ENCODE measurements at regions of chr10 and their contacts with region 1.

Region 1: GRCh38 chr10:102394079-102394800 is 1.3 kb upstream of the NFKB2 start:
- DNase-seq: peak; percentile 98
- H3K4me3 ChIP-seq: peak overlapping the region; percentile 61 to 76 (median 68)
- H3K27ac ChIP-seq: peak overlapping the region; percentile 97 to 99 (median 98)
- H3K4me1 ChIP-seq: peaks cover 0 to 47% (median 45%) of the 10 kb centered on the region in 4 donors
- H3K27me3 ChIP-seq: no peaks in the 10 kb centered on the region
- CTCF ChIP-seq: peak; percentile 18 to 99 (median 70)
- EP300 ChIP-seq: peak in 2 of 4 donors; percentile 78 to 92
- POLR2A ChIP-seq: peak; percentile 51 to 55

Region 2: DNA sequence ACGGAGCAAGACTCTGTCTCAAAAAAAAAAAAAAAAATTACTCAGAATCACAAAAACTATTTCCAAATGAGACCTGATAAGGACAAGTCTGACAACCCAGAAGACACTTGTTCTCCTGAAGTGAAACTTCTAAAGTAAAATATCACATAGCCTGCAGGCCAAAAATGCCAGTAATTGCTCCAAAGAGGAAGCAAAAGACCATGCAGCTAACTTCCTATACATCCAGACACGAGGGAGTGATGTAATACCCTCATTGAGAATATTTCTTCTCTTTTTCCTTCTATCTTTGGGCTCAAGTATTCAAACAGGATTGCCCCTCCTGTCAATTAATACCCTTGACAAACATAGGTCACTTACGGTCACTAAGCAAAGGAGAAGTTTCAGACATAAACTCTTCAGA is 369.4 kb before region 1 on chr10:
- intact Hi-C with region 1: no loop called
- DNase-seq: no peak
- H3K4me3 ChIP-seq: no peak overlapping the region
- H3K27ac ChIP-seq: no peak overlapping the region
- H3K4me1 ChIP-seq: no peaks in the 10 kb centered on the region
- H3K27me3 ChIP-seq: no peaks in the 10 kb centered on the region
- CTCF ChIP-seq: no peak
- EP300 ChIP-seq: no peak
- POLR2A ChIP-seq: no peak

Region 3: GRCh38 chr10:102407437-102408130 is 13.3 kb after region 1 on chr10:
- intact Hi-C with region 1: loop called (anchors 1 kb)
- DNase-seq: peak; percentile 92
- H3K4me3 ChIP-seq: peak overlapping the region; percentile 70 to 80 (median 78)
- H3K27ac ChIP-seq: peak overlapping the region; percentile 84 to 99 (median 98)
- H3K4me1 ChIP-seq: peaks cover 0 to 67% (median 64%) of the 10 kb centered on the region in 4 donors
- H3K27me3 ChIP-seq: peaks cover 0 to 22% (median 10%) of the 10 kb centered on the region in 3 donors
- CTCF ChIP-seq: no peak
- EP300 ChIP-seq: peak; percentile 100
- POLR2A ChIP-seq: no peak

Region 4: DNA sequence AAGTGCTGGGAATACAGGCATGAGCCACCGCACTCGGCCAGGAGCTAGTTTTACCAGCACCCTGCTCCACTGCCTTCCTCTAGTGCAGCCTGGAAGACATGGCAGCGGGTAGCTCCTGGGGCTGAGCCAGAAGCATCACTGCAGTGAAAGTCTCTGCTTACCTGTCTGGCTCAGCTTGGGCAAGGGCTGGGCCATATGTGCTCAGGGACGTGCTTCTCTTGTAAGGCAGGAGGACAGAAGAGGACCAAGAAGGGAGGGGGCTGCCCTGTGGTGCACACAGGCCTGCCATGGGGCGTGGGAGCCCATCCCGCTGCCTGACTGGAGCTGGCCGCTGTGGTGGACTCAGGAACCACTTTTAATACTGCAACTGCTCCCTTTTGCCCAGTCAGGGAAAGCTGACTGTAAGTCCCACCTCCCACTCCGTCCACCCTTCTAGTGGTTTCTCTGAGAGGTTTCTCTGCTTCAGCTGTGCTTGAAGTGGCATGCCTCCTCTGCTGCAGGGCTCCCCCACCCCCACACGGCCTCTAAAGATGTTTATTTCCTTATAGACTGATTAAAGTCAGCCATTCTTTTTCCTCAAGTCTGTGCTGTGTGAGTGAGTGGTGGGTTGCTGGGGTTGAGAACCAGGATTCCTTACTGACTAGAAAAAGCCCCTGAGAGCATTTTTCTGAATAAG is 82.4 kb after region 1 on chr10:
- intact Hi-C with region 1: loop called (anchors 1 kb)
- DNase-seq: no peak
- H3K4me3 ChIP-seq: no peak overlapping the region
- H3K27ac ChIP-seq: peak overlapping the region in 3 of 4 donors; percentile 20 to 26 (median 20)
- H3K4me1 ChIP-seq: no peaks in the 10 kb centered on the region
- H3K27me3 ChIP-seq: no peaks in the 10 kb centered on the region
- CTCF ChIP-seq: no peak
- EP300 ChIP-seq: no peak
- POLR2A ChIP-seq: no peak

Region 5: GRCh38 chr10:102583435-102584417 is 189.5 kb after region 1 on chr10:
- intact Hi-C with region 1: loop called (anchors 5 kb)
- DNase-seq: peak; percentile 94
- H3K4me3 ChIP-seq: no peak overlapping the region
- H3K27ac ChIP-seq: peak overlapping the region in 1 of 4 donors; percentile 41
- H3K4me1 ChIP-seq: peaks cover 0 to 26% (median 15%) of the 10 kb centered on the region in 4 donors
- H3K27me3 ChIP-seq: no peaks in the 10 kb centered on the region
- CTCF ChIP-seq: peak; percentile 47 to 84 (median 78)
- EP300 ChIP-seq: no peak
- POLR2A ChIP-seq: no peak

Measured in sigmoid colon (tissue), 7 donors.